Dendritic cell treated with granulocyte-macrophage colony-stimulating factor and Interleukin-4, amounts not matched to agents 40 ng/mL and 50 ng/mL, for 4 days (primary cell): ENCODE measurements at regions of chr1 and their contacts with region 1.

Region 1: DNA sequence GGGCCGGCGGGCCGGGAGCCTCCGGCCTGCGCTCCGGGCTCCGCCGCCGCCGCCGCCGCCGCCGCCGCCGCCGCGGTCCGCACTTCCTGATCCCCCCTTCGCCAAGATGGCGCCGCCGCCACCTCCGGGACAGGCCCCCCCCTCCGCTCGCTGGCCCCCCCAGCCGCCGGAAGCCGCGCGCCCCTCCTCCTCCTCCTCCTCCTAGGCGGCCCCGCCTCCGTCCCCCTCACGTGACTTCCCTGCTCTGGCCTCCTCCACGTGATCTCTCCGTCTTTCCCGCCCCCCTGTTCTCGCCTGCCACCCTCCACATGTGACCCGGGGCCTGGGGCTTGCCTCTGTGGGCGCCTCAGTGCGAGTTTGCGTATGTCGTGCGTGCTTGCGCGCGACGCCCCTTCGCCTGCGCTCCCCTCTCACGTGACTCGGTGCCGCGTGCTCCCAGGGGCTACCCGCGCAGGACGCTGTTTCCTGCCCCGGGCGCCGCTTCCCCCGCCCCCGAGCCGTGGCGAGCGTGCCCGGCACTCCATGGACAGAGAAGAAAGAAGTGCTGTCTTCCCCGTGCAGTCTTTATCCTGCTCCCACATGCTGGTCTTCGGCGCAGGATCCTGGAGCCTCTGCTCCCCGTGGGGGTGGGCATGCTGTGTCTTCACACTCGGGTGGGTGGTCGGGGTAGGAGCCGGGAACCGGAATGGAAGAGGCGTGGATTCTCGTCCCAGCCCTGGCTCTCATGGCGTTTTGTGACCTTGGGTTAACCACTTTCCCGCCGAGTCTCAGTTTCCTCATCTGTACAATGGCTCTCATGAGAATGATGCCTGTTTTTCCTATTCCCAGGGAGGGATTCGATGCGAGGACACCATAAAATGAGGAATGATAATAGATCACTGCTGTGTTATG is at the start of gene UBE2Q1:
- H3K4me3 Mint-ChIP-seq: peak within 1 kb of the TSS; percentile 96
- H3K27ac Mint-ChIP-seq: peak within 1 kb of the TSS; percentile 92
- H3K4me1 Mint-ChIP-seq: peaks cover 28% of the 10 kb centered on the region
- H3K27me3 Mint-ChIP-seq: peaks cover 3% of the 10 kb centered on the region

Region 2: DNA sequence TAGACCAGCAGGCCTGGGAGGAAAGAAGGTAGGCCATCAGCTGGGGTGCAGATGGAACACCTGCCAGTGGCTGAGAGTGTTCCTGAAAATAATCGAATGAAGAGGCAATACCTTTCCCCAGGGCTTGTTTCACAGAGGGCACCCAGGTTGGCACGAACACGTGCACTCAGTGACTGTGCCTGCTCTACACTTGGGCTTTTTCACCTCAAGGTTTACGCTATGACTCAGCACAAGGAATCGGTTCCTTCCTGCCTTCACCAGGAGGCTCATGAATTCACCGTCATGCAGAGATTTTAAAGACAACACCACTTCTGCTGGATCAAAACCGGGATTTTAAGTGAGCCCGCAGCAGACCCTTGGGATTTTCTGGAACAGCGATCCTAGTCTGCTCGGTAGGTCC is 167.6 kb after region 1 on chr1:
- intact Hi-C with region 1: no loop called
- H3K4me3 Mint-ChIP-seq: no peak overlapping the region
- H3K27ac Mint-ChIP-seq: peak overlapping the region; percentile 30
- H3K4me1 Mint-ChIP-seq: peaks cover 68% of the 10 kb centered on the region
- H3K27me3 Mint-ChIP-seq: peaks cover 36% of the 10 kb centered on the region

Region 3: GRCh38 chr1:154878371-154879022 is 319.7 kb after region 1 on chr1:
- intact Hi-C with region 1: loop called (anchors 2 kb)
- H3K4me3 Mint-ChIP-seq: no peak overlapping the region
- H3K27ac Mint-ChIP-seq: no peak overlapping the region
- H3K4me1 Mint-ChIP-seq: no peaks in the 10 kb centered on the region
- H3K27me3 Mint-ChIP-seq: peaks cover 5% of the 10 kb centered on the region

Region 4: GRCh38 chr1:154936555-154937084 is 377.8 kb after region 1 on chr1 and contains the start of gene PMVK:
- intact Hi-C with region 1: loop called (anchors 2 kb)
- H3K4me3 Mint-ChIP-seq: peak within 1 kb of the TSS; percentile 79
- H3K27ac Mint-ChIP-seq: peak within 1 kb of the TSS; percentile 88
- H3K4me1 Mint-ChIP-seq: peaks cover 54% of the 10 kb centered on the region
- H3K27me3 Mint-ChIP-seq: no peaks in the 10 kb centered on the region